ENCODE measurements at regions of chr7 and their contacts with region 1.

Region 1: GRCh38 chr7:5237286-5237685 is 45.5 kb upstream of the SLC29A4 start:
- DNase-seq: no peak
- H3K4me3 ChIP-seq: no peak overlapping the region
- CTCF ChIP-seq: no peak

Region 2: DNA sequence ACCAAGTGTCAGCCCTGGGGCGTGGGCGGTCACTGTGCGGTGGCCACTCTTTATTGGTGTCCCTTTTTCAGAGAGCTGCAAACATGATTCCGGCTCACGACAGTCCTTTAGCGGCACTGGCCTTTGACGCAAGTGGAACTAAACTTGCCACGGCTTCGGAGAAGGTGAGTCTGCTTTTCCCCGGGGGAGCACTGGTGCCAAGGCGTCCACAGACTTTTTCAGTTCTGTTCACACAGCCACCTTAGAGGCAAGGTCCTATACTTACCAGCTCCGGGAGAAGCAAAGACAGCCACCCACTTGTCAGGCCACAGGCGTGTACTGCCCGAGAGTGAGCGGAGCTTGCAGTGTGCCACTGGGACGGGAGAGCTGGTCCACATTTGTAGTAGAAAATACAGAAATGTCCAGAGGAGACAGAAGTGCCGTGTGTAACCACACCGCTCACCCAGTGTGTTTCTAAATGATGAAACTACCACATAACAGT is 19.4 kb before region 1 on chr7:
- CTCF ChIA-PET with region 1: interaction called, 13 read pairs
- POLR2A ChIA-PET with region 1: no interaction called
- DNase-seq: no peak
- H3K4me3 ChIP-seq: no peak overlapping the region
- CTCF ChIP-seq: no peak

Region 3: DNA sequence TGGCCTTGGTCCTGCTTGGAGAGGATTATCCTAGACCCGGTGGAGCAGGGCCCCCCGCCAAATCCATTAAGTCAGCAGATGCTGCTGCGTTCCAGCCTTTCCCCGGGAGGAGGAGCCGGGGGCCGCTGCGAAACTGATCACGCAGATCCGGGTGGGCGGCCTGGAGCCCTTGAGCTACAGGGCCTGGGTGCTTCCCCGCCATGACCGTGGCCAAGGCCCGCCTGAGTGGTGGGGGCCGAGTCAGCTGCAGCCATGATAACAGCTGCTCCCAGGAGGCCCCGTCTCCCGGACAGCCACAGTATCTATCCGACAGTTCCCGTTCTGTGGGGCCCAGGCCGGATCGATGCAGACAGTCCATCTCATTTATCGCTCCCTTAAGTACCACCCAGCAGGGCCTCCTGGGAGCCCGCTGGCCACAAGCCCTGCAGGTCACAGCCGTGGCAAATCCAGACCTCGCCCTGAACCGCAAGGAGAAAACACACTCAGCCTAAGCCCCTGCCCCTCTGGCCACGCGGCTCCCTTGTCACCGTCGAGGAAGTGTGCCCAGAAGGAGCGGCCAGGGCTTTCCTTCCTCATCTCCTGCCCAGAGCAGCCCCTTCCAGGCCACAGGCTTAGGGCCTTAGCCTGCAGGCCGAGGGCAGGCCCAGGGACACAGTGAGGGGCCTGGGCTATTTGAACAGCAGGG is 11.1 kb after region 1 on chr7:
- CTCF ChIA-PET with region 1: interaction called, 13 read pairs
- POLR2A ChIA-PET with region 1: interaction called, 3 read pairs
- DNase-seq: no peak
- H3K4me3 ChIP-seq: no peak overlapping the region
- CTCF ChIP-seq: no peak

Region 4: DNA sequence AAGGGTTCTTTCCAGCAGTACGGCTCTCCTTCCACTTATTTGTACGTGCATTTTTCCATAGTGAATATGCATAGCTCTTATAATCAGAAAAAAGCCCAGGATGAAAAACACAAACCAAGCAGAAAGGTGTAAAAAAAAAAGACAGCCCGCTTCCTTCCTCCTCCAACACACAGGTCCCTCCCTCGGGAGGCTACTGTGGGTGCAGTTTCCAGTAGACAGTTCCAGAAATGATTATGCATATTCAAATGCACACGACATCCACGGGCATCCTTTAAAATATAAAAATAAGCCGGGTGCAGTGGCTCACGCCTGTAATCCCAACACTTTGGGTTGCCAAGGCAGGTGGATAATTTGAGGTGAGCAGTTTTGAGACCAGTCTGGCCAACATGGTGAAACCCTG is 126.4 kb after region 1 on chr7:
- CTCF ChIA-PET with region 1: interaction called, 10 read pairs
- POLR2A ChIA-PET with region 1: no interaction called
- DNase-seq: no peak
- H3K4me3 ChIP-seq: no peak overlapping the region
- CTCF ChIP-seq: no peak

Region 5: DNA sequence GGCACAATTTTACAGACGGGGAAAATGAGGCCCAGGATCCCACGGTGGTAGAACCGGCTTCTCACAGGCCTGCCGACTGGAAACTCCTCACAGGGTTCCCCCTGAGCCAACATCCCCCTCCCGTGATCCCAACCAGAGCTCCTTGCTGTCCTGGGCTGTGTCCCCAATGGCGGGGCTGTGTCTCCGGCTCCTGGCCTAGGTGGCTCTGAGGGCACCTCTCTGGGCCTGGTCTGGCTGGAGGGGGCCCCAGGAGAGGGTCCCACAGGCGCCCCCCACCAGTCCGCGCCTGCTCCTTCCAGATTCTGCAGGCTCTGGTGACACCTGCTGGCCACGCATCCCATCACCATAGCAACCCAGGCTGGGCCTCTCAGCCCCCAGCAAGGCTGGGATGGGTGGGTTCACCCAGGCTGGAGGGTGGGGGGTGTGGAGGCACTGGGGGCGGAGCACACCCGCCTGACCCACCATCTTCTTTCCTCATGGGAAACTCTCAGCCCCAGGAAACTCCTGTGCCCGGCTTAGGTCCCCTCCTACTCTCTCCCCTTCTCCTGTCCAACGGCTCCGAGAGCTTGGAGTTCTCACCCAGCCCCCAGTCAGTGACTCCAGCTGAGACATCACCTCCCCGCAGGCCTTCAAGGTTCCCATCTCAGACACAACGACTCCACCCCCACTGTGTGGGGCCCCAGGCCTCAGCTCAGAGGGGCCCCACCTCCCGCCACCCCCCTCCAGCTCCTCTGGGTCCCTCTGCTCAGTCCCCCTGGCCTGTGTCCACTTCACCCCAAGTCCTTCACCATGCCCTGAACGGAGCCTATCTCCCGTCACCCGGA is 213.5 kb after region 1 on chr7:
- CTCF ChIA-PET with region 1: interaction called, 63 read pairs
- POLR2A ChIA-PET with region 1: interaction called, 7 read pairs
- DNase-seq: no peak
- H3K4me3 ChIP-seq: no peak overlapping the region
- CTCF ChIP-seq: peak; percentile 59

Region 6: GRCh38 chr7:5457245-5457735 is 220.0 kb after region 1 on chr7:
- CTCF ChIA-PET with region 1: interaction called, 63 read pairs
- POLR2A ChIA-PET with region 1: no interaction called
- DNase-seq: no peak
- H3K4me3 ChIP-seq: no peak overlapping the region
- CTCF ChIP-seq: no peak

Region 7: GRCh38 chr7:5477723-5478531 is 240.6 kb after region 1 on chr7:
- CTCF ChIA-PET with region 1: interaction called, 18 read pairs
- POLR2A ChIA-PET with region 1: no interaction called
- DNase-seq: no peak
- H3K4me3 ChIP-seq: no peak overlapping the region
- CTCF ChIP-seq: peak; percentile 36

Measured in AG04449 (cell line).